Pancreas (tissue), 10 donors: ENCODE measurements at regions of chr16 and their contacts with region 1.

Region 1: DNA sequence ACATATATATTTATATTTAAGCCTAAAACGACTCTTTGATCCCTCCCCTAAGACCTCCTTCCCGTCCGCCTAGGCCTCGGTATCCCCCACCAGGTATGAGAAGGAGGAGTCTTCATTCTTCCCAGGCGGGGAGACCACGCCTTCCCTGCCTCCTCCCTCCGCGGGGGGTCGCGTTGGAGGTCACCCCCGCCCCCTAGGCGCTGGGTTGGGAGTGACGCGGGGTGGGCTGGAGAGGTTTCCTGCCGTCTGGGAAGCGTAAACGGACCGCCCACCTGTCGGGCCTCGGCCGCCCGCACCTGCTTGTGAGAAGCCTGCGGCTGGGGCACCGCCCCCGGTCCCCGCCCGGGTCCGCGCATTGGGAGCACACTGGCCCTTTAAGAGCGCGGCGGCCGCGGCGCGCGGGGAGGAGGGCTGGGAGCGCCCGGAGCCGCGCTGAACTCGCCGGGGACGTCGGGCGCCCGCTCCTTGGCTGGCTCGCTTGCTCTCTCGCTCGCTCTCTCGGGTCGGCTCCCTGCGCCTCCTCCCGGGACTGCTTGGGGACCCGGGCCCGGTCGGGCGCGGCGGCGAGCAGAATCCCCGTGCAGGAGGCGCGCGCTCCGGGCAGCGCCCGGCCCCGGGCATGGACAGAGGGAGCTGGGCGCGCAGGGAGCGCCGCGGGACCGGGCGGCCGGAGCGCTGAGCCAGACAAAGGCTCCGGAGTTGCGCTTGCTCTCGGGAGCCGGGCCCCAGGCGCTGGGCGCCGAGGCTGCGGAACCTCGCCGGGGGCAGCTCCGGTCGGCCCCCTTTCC is at the start of gene MMP15:
- DNase-seq: peak; percentile 92 to 96 (median 94)
- ATAC-seq: peak; percentile 70 to 79 (median 77)
- H3K4me3 ChIP-seq: peak within 1 kb of the TSS; percentile 73 to 86 (median 82)
- H3K27ac ChIP-seq: peak within 1 kb of the TSS; percentile 82 to 90 (median 83)
- H3K4me1 ChIP-seq: peaks cover 15 to 25% (median 24%) of the 10 kb centered on the region in 3 donors
- H3K27me3 ChIP-seq: no peaks in the 10 kb centered on the region
- CTCF ChIP-seq: no peak
- total RNA-seq, gene MMP15: 11.2 to 30.2 (median 17.7) TPM

Region 2: DNA sequence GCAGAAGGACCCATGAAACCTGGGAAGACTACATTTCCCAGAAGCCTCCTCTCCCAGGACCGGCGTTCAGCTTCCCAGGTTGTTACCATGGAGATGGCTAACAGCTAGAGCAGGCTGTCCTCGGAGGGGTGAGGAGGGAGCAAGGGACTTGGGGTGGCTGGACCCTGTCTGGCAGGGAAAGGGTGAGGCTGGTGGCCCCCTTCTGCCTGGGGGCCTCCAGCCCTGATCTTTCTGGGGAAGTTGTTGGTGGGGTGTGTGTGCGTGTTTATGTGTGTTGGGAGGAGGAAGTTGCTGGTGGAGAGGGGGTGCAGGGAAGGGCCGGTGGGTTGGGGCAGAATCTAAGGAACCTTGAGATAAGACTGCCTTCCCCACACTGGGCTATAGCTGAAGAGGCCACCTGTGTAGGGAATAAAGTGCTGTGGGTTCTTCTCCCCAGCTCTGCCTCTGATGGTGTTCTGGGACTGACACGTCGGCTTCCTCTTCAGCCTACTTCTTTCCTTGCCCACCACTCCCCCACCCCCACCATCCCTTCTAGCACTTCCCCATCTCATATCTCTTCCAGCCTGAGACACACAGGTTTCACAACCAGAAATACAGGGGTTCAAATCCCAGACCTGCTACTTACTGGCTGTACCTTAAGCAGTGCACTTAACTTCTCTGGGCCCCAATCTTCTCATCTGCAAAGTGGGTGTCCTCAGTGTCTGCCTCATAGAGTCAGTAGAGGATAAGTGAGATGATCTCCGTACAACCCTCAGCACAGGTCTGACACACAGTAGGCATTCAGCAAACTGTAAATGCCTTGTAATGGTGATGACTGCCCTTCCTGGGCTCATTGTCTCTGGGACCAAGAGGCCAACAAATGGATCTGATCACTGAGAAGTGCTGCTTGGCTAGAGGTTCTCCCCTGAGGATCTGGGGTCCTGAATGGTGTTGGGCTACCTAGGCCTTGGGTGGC is 330.5 kb before region 1 on chr16 and contains the start of gene DRC7:
- intact Hi-C with region 1: no loop called
- DNase-seq: peak; percentile 67 to 85 (median 82)
- ATAC-seq: peak; percentile 87 to 94 (median 92)
- H3K4me3 ChIP-seq: peak within 1 kb of the TSS in 2 of 4 donors; percentile 11 to 24
- H3K27ac ChIP-seq: peak within 1 kb of the TSS; percentile 56 to 81 (median 73)
- H3K4me1 ChIP-seq: peaks cover 6 to 13% (median 9%) of the 10 kb centered on the region in 3 donors
- H3K27me3 ChIP-seq: no peaks in the 10 kb centered on the region
- CTCF ChIP-seq: no peak
- total RNA-seq, gene DRC7: 0.28 to 2.4 (median 0.61) TPM

Region 3: GRCh38 chr16:58129097-58129936 is 103.8 kb after region 1 on chr16 and contains the start of gene CFAP20:
- intact Hi-C with region 1: loop called (anchors 5 to 10 kb)
- DNase-seq: peak; percentile 97 to 99 (median 99)
- ATAC-seq: peak; percentile 94 to 97 (median 95)
- H3K4me3 ChIP-seq: peak within 1 kb of the TSS; percentile 45 to 87 (median 66)
- H3K27ac ChIP-seq: peak within 1 kb of the TSS; percentile 75 to 85 (median 80)
- H3K4me1 ChIP-seq: peaks cover 23 to 24% (median 23%) of the 10 kb centered on the region in 3 donors
- H3K27me3 ChIP-seq: no peaks in the 10 kb centered on the region
- CTCF ChIP-seq: no peak
- total RNA-seq, gene CFAP20: 5.7 to 10.6 (median 8.3) TPM

Region 4: GRCh38 chr16:58160855-58161254 is 135.3 kb after region 1 on chr16:
- intact Hi-C with region 1: no loop called
- DNase-seq: no peak
- ATAC-seq: no peak
- H3K4me3 ChIP-seq: no peak overlapping the region
- H3K27ac ChIP-seq: no peak overlapping the region
- H3K4me1 ChIP-seq: no peaks in the 10 kb centered on the region
- H3K27me3 ChIP-seq: no peaks in the 10 kb centered on the region
- CTCF ChIP-seq: no peak